Activated CD4-positive, alpha-beta memory T cell treated with anti-CD3 and anti-CD28 coated beads, Interleukin-2, amount 10 ng/mL, durations not matched to agents 7 days and 5 days (primary cell): ENCODE measurements at regions of chr21 and their contacts with region 1.

Region 1: DNA sequence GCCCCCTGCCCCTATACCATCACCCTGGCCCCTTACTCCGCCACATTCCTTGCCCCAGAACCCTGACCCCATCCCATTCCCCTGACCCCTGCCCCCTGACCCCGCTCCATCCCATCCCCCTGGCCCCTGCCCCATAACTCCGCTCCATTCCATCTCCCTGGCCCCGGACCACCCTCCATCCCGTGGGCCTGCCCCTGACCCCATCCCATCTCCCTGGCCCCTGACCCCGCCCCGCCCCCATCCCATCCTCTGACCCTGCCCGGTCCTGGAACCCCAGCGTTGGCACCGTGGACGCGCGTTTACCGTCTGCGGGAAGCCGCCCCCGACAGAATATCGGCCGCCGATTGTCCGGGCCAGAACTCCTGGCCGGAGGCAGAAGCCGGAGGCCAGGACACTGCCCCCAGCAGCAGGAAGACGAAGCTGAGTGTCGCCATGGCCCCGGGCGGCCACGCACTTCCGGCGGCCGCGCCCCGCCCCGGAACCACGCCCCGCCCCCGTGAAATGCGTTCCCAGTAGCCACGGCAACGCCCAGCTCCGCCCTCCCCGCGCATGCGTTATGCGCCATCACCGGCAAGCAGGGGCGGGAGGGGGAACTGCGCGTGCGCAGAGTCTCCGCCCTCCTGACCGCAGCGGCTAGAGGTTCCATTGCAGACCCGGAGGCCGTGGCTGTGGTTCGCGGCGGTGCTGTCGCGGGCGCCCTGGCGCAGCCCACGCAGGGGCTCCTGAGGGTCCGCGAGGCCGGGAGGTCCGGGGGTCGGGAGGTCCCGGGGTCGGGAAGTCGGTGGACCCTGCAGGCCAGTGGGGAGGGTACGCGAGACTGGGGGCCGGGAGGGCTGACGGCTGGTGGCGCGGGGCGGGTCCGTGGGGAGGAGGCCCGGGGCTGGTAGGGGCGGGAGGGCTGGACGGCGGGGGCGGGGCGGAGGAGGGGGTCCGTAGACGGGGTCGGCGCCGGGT is at the start of gene POFUT2:
- DNase-seq: peak; percentile 99
- H3K4me3 Mint-ChIP-seq: peak within 1 kb of the TSS; percentile 82
- H3K27ac Mint-ChIP-seq: peak within 1 kb of the TSS; percentile 75
- H3K4me1 Mint-ChIP-seq: peaks cover 46% of the 10 kb centered on the region
- H3K27me3 Mint-ChIP-seq: no peaks in the 10 kb centered on the region
- total RNA-seq, gene POFUT2: 23.5 to 25.1 TPM

Region 2: GRCh38 chr21:45357436-45358260 is 69.9 kb after region 1 on chr21:
- CTCF ChIA-PET with region 1: no interaction called
- POLR2A ChIA-PET with region 1: no interaction called
- DNase-seq: no peak
- H3K4me3 Mint-ChIP-seq: no peak overlapping the region
- H3K27ac Mint-ChIP-seq: no peak overlapping the region
- H3K4me1 Mint-ChIP-seq: peaks cover 4% of the 10 kb centered on the region
- H3K27me3 Mint-ChIP-seq: peaks cover 26% of the 10 kb centered on the region

Region 3: GRCh38 chr21:45439161-45439872 is 151.6 kb after region 1 on chr21:
- CTCF ChIA-PET with region 1: interaction called, 11 read pairs
- POLR2A ChIA-PET with region 1: no interaction called
- DNase-seq: peak; percentile 87
- H3K4me3 Mint-ChIP-seq: peak overlapping the region; percentile 54
- H3K27ac Mint-ChIP-seq: no peak overlapping the region
- H3K4me1 Mint-ChIP-seq: peaks cover 13% of the 10 kb centered on the region
- H3K27me3 Mint-ChIP-seq: peaks cover 4% of the 10 kb centered on the region